Activated CD4-positive, alpha-beta T cell treated with anti-CD3 and anti-CD28 coated beads for 36 hours (primary cell): ENCODE measurements at regions of chr3 and their contacts with region 1.

Region 1: GRCh38 chr3:119676771-119677640 is at the start of gene COX17:
- DNase-seq: peak; percentile 97
- ATAC-seq: peak; percentile 91
- H3K4me3 Mint-ChIP-seq: peak within 1 kb of the TSS; percentile 95
- H3K27ac Mint-ChIP-seq: peak within 1 kb of the TSS; percentile 97
- H3K4me1 Mint-ChIP-seq: peaks cover 36% of the 10 kb centered on the region
- H3K27me3 Mint-ChIP-seq: no peaks in the 10 kb centered on the region
- total RNA-seq, gene COX17: 69.5 to 82.8 TPM

Region 2: DNA sequence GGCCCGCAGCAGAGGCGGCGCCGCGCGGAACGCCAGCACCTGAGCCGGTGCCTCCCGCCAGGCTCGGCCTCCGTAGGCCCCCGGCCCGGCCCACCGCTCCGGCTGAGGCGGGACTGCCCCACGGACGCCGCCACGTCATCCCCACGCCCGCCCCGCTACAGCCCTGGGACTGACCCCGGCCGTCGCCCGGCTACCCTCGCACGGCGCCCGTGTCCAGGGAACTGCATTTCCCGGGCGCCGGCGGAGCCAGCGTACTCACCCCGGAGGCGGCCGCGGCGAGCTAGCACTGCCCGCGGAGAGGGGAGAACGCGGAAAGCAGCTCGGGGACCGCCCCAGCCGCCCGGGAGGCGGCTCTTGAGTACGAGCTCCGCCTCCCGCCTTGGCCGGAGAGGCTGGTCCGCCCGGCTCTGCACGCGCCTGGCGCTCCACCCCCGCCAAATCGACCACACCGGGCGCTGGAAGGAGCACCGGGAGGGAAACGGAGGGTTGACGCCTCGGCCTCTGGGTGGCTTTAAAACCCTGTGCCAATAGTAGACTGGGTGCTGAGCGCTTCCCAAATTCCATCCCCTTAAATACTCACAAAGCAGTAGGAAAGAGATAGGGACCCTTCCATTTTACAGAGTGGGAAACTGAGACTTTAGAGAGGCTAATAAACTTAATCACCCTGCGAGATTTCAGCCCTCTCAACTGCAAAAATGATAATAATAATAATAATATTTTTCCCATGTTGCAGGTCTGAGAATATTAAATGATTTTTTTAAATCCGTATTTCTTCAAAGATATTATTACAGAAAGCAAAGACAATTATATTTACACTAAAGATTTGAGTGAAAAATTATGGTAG is 436.2 kb before region 1 on chr3 and contains the start of gene B4GALT4:
- CTCF ChIA-PET with region 1: interaction called, 6 read pairs
- POLR2A ChIA-PET with region 1: no interaction called
- intact Hi-C with region 1: loop called in 1 of 2 experiments (anchors 1 kb)
- DNase-seq: peak; percentile 86
- ATAC-seq: peak; percentile 75
- H3K4me3 Mint-ChIP-seq: peak within 1 kb of the TSS; percentile 89
- H3K27ac Mint-ChIP-seq: peak within 1 kb of the TSS; percentile 99
- H3K4me1 Mint-ChIP-seq: peaks cover 40% of the 10 kb centered on the region
- H3K27me3 Mint-ChIP-seq: no peaks in the 10 kb centered on the region
- total RNA-seq, gene B4GALT4: 16.6 to 16.7 TPM

Region 3: GRCh38 chr3:119388577-119388976 is 288.4 kb before region 1 on chr3:
- CTCF ChIA-PET with region 1: no interaction called
- POLR2A ChIA-PET with region 1: no interaction called
- intact Hi-C with region 1: no loop called
- DNase-seq: no peak
- ATAC-seq: no peak
- H3K4me3 Mint-ChIP-seq: no peak overlapping the region
- H3K27ac Mint-ChIP-seq: no peak overlapping the region
- H3K4me1 Mint-ChIP-seq: no peaks in the 10 kb centered on the region
- H3K27me3 Mint-ChIP-seq: no peaks in the 10 kb centered on the region

Region 4: DNA sequence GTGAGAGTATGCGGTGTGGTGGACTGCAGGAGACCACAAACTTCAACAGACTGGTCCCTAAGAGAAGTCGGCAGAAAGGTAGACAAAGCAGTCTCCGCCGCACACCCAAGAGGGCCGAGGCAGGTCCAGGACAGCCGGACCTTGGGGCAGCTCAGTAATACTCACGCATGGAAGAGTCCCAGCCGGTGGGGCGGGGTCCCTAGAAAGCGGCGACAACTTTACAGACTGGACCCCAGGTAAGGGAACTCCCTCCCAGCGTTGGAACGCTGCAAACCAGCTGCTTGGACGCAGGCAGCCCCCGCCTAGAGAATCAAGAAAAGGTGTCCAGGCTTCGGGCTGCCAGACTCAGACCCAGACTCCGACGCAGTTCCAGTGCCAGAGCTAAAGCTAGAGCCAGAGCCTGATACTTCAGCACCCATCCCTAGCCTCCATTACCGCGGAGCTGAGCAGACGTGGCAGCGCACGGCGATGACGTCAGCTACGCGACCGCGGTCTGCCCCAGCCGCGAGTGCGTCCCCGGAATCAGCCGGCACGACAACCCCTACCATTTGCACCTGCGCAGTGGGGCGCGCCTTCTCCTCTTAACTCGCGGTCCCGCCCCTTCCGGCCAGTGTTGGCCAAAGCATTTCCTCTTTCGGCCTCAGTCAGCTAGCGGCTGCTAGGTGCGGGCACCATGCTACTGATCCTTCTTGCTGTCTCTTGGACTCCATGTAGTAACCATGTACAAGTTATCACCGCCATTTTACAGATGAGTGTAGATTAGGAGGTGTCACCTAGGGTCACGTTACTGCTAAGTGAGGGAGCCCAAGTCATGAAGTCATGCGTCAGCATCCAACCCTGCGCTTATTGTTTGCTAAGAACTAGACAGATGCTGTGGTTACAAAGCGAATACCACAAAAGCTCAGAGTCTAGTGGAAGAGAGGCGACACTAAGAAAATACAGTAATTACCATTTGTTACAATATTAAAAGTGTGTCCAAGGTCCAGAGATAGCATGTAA is 213.5 kb before region 1 on chr3 and contains the start of gene TMEM39A:
- CTCF ChIA-PET with region 1: interaction called, 3 read pairs
- POLR2A ChIA-PET with region 1: interaction called, 3 read pairs
- intact Hi-C with region 1: loop called (anchors 1 kb)
- DNase-seq: peak; percentile 99
- ATAC-seq: peak; percentile 89
- H3K4me3 Mint-ChIP-seq: peak within 1 kb of the TSS; percentile 99
- H3K27ac Mint-ChIP-seq: peak within 1 kb of the TSS; percentile 91
- H3K4me1 Mint-ChIP-seq: peaks cover 41% of the 10 kb centered on the region
- H3K27me3 Mint-ChIP-seq: no peaks in the 10 kb centered on the region
- total RNA-seq, gene TMEM39A: 24.5 to 30.5 TPM

Region 5: DNA sequence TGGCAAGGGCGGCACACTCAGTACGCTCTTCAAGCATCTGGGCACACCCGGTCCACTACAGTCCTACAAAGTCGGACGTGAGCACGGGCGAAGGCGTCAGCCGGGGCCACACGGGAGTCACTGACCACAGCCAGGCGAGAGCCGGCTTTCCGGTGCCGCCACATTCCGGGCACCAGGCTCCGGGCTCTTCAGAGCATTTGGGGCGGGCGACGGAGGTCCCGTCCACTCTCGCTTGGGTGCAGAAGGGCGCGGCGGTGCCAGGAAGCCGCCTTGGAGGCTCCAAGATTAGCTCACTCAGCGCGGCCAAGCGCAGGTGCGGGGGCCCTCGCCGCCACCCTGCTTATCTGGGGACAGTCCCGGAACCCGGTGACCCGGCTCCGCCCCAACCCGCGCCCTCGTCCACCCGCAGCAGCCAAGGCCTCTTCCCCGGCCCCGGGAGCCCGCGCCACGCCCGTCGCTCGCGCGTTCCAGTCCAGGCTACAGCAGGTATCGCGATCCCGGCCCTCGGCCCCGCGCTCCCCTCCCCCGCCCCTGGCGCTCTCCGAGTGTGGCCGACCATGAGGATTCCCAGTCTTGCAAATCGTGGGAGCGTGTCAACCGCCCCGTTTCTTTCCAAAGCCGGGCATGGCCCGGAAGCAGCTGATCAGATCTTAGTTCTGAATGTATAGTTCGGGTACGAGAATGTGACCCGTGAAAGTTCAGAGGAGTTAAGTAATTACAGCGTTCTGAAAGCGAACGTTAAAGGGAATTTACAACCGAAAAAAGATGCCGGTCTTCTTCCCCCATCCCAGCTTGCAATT is 97.4 kb before region 1 on chr3 and contains the start of gene ADPRH:
- CTCF ChIA-PET with region 1: no interaction called
- POLR2A ChIA-PET with region 1: no interaction called
- intact Hi-C with region 1: loop called in 1 of 2 experiments (anchors 5 kb)
- DNase-seq: peak; percentile 75
- ATAC-seq: peak; percentile 79
- H3K4me3 Mint-ChIP-seq: peak within 1 kb of the TSS; percentile 79
- H3K27ac Mint-ChIP-seq: peak within 1 kb of the TSS; percentile 87
- H3K4me1 Mint-ChIP-seq: peaks cover 17% of the 10 kb centered on the region
- H3K27me3 Mint-ChIP-seq: peaks cover 4% of the 10 kb centered on the region
- total RNA-seq, gene ADPRH: 2.5 to 3.5 TPM

Region 6: GRCh38 chr3:119702530-119703157 is 25.6 kb after region 1 on chr3 and contains the start of gene CFAP91:
- CTCF ChIA-PET with region 1: interaction called, 5 read pairs
- POLR2A ChIA-PET with region 1: no interaction called
- intact Hi-C with region 1: loop called (anchors 1 to 2 kb)
- DNase-seq: peak; percentile 90
- ATAC-seq: peak; percentile 86
- H3K4me3 Mint-ChIP-seq: peak within 1 kb of the TSS; percentile 67
- H3K27ac Mint-ChIP-seq: peak within 1 kb of the TSS; percentile 59
- H3K4me1 Mint-ChIP-seq: peaks cover 39% of the 10 kb centered on the region
- H3K27me3 Mint-ChIP-seq: peaks cover 5% of the 10 kb centered on the region
- total RNA-seq, gene CFAP91: 0.25 to 0.67 TPM